ENCODE measurements at regions of chr3 and their contacts with region 1.

Region 1: DNA sequence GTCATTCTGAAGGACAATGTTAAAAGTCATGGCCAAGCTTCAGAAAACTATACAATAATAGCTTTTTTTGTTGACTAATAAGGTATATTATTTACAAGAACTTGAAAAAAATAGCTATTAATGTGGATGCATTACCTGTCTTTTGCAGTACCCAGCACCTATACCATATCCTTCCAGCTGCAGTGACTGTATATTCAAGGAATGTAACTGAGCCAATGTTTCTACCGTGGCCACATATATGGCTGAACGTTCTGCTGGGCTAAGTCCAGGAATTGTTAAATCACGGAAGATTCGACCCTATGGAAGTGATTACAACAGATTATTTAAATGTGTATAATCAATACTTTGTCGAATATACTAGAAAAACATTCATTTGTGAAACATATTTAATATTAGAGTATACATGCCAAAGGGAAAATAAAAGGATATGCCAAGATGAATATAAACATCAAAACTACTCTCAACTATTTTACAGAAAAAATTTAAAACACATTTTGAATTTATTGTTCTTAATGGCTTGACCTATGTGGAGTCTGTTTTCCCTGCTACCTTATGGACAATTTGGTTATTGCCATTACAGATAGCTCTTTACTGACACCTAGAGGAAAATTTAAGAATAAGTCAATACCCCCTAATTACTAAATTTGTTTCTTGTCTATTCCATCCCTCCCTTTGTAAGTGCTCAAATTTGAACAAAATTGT is 17.6 kb downstream of the ACAD11 start:
- DNase-seq: peak; percentile 67
- ATAC-seq: peak; percentile 72
- H3K4me3 ChIP-seq: no peak overlapping the region
- H3K27ac ChIP-seq: no peak overlapping the region
- H3K4me1 ChIP-seq: peaks cover 9% of the 10 kb centered on the region
- H3K27me3 ChIP-seq: no peaks in the 10 kb centered on the region
- CTCF ChIP-seq: peak; percentile 86
- POLR2A ChIP-seq: 0 out of 2 replicates have a peak, but pooled peaks have one; percentile 29
- RAD21 ChIP-seq: peak; percentile 86

Region 2: DNA sequence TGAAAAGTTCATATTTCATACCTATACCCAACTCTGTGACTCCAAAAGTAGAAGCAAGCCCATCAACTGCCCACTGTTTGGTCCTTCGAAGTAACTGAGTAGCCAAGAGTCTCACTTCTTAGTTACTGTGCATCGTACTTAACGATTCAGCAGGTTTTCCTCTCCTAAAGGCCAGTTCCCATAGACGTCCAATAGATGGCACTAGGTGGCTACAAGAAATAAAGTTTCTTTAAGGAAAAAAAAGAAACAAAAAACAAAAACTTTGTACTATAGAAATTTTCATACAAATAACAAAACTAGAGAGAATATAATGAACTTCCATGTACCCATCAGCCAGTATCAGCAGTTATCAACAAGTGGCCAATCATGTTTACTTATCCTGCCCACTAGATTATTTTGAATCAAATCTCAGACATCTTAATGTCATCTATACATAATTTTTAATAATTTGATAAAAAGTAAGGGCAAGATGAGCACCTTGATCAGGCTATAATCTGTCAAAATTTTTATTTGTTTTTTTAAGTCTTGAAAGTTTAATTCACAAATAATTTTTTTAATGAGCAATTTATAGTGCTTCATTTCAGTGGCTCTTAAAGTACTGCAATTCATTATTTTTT is 388.6 kb before region 1 on chr3:
- CTCF ChIA-PET with region 1: interaction called, 3 read pairs
- POLR2A ChIA-PET with region 1: no interaction called
- dilution Hi-C with region 1: no loop called
- in situ Hi-C with region 1: loop called (anchors 25 kb)
- intact Hi-C with region 1: loop called (anchors 5 kb)
- DNase-seq: peak; percentile 76
- ATAC-seq: peak; percentile 55
- H3K4me3 ChIP-seq: no peak overlapping the region
- H3K27ac ChIP-seq: no peak overlapping the region
- H3K4me1 ChIP-seq: peaks cover 8% of the 10 kb centered on the region
- H3K27me3 ChIP-seq: no peaks in the 10 kb centered on the region; the same call in 1 of the 2 replicates
- CTCF ChIP-seq: peak; percentile 89
- POLR2A ChIP-seq: no peak
- RAD21 ChIP-seq: peak; percentile 68

Region 3: GRCh38 chr3:132352541-132353143 is 289.3 kb before region 1 on chr3:
- CTCF ChIA-PET with region 1: no interaction called
- POLR2A ChIA-PET with region 1: no interaction called
- dilution Hi-C with region 1: no loop called
- in situ Hi-C with region 1: no loop called
- intact Hi-C with region 1: loop called (anchors 2 kb)
- DNase-seq: peak; percentile 68
- ATAC-seq: peak; percentile 96
- H3K4me3 ChIP-seq: no peak overlapping the region
- H3K27ac ChIP-seq: no peak overlapping the region
- H3K4me1 ChIP-seq: no peaks in the 10 kb centered on the region
- H3K27me3 ChIP-seq: peaks cover 5% of the 10 kb centered on the region
- CTCF ChIP-seq: peak; percentile 91
- POLR2A ChIP-seq: no peak
- RAD21 ChIP-seq: peak; percentile 69

Region 4: DNA sequence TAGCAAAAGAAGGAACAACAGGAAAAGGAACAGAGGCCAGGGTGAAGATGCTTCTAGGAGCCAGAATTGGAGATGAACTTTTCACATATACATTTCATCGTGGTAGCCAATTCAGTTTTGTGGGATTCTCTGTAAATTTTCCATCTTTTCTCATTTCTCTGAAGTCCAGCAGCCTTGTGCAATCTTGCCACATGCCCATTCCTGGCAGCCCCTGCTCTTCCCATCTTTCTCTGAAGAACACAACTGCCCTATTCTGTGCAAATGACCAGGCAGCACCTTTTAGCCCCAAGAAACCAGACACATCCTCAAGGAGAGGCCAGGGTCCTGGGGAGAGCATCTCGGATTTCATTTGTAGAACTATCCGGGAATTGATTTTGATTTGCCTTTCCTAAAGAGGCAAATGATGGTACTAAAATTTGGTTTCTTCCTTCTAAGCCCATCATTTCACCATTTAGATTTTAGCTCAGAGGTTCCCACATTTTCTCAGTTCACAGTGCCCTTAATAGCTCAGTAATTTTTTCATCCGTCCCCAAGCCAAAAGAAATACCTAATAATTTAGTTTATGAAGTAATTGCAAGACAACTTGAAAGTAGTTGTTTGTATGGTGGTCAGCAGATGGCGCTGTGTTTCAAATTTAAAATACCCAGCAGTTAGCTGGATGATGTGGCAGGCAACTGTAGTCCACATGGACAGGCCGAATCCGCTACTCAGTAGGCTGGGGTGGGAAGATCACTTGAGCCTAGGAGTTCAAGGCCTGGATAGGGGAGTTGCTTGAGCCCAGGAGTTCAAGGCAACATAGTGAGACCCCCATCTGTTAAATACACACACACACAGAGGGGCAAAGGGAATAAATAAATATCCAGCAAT is 106.2 kb before region 1 on chr3:
- CTCF ChIA-PET with region 1: interaction called, 27 read pairs
- POLR2A ChIA-PET with region 1: no interaction called
- dilution Hi-C with region 1: loop called (anchors 25 kb)
- in situ Hi-C with region 1: loop called (anchors 5 kb)
- intact Hi-C with region 1: loop called (anchors 1 kb)
- DNase-seq: peak; percentile 90
- ATAC-seq: peak; percentile 92
- H3K4me3 ChIP-seq: no peak overlapping the region
- H3K27ac ChIP-seq: peak overlapping the region; percentile 66
- H3K4me1 ChIP-seq: peaks cover 21% of the 10 kb centered on the region
- H3K27me3 ChIP-seq: no peaks in the 10 kb centered on the region
- CTCF ChIP-seq: peak; percentile 75
- POLR2A ChIP-seq: no peak
- RAD21 ChIP-seq: peak; percentile 76

Region 5: GRCh38 chr3:132543036-132543739 is 98.8 kb before region 1 on chr3:
- CTCF ChIA-PET with region 1: interaction called, 7 read pairs
- POLR2A ChIA-PET with region 1: no interaction called
- dilution Hi-C with region 1: loop called (anchors 25 kb)
- in situ Hi-C with region 1: loop called (anchors 5 kb)
- intact Hi-C with region 1: no loop called
- DNase-seq: peak; percentile 97
- ATAC-seq: peak; percentile 89
- H3K4me3 ChIP-seq: no peak overlapping the region
- H3K27ac ChIP-seq: peak overlapping the region; percentile 98
- H3K4me1 ChIP-seq: peaks cover 25% of the 10 kb centered on the region
- H3K27me3 ChIP-seq: no peaks in the 10 kb centered on the region
- CTCF ChIP-seq: no peak
- POLR2A ChIP-seq: no peak
- RAD21 ChIP-seq: no peak

Region 6: GRCh38 chr3:132605374-132605792 is 36.6 kb before region 1 on chr3:
- CTCF ChIA-PET with region 1: no interaction called
- POLR2A ChIA-PET with region 1: no interaction called
- dilution Hi-C with region 1: no loop called
- in situ Hi-C with region 1: no loop called
- intact Hi-C with region 1: loop called (anchors 2 kb)
- DNase-seq: peak; percentile 23
- ATAC-seq: peak; percentile 45
- H3K4me3 ChIP-seq: no peak overlapping the region
- H3K27ac ChIP-seq: peak overlapping the region; percentile 51
- H3K4me1 ChIP-seq: peaks cover 15% of the 10 kb centered on the region
- H3K27me3 ChIP-seq: no peaks in the 10 kb centered on the region
- CTCF ChIP-seq: no peak
- POLR2A ChIP-seq: no peak
- RAD21 ChIP-seq: no peak

Region 7: GRCh38 chr3:132695422-132695821 is 53.4 kb after region 1 on chr3:
- CTCF ChIA-PET with region 1: no interaction called
- POLR2A ChIA-PET with region 1: no interaction called
- dilution Hi-C with region 1: no loop called
- in situ Hi-C with region 1: no loop called
- intact Hi-C with region 1: no loop called
- DNase-seq: peak; percentile 13
- ATAC-seq: no peak
- H3K4me3 ChIP-seq: no peak overlapping the region
- H3K27ac ChIP-seq: no peak overlapping the region
- H3K4me1 ChIP-seq: peaks cover 2% of the 10 kb centered on the region; the same call in 1 of the 2 replicates
- H3K27me3 ChIP-seq: no peaks in the 10 kb centered on the region
- CTCF ChIP-seq: no peak
- POLR2A ChIP-seq: no peak
- RAD21 ChIP-seq: no peak